SK-N-SH (cell line): ENCODE measurements at regions of chr15 and their contacts with region 1.

Region 1: GRCh38 chr15:90174140-90174875 is 26.8 kb upstream of the SEMA4B start:
- DNase-seq: peak; percentile 89
- H3K4me3 ChIP-seq: no peak overlapping the region
- H3K27ac ChIP-seq: peak overlapping the region; percentile 41 to 89; a peak in 3 of 4 replicates
- H3K4me1 ChIP-seq: peaks cover 11 to 13% of the 10 kb centered on the region in 2 experiments; a peak in 2 of 4 replicates
- H3K27me3 ChIP-seq: no peaks in the 10 kb centered on the region
- CTCF ChIP-seq: no peak
- EP300 ChIP-seq: peak in 1 of 2 experiments; percentile 82; a peak in 3 of 4 replicates
- RAD21 ChIP-seq: no peak

Region 2: GRCh38 chr15:89926158-89926557 is 248.2 kb before region 1 on chr15:
- CTCF ChIA-PET with region 1: no interaction called
- POLR2A ChIA-PET with region 1: no interaction called
- DNase-seq: no peak
- H3K4me3 ChIP-seq: no peak overlapping the region
- H3K27ac ChIP-seq: no peak overlapping the region
- H3K4me1 ChIP-seq: peaks cover 0 to 3% of the 10 kb centered on the region in 2 experiments; a peak in 1 of 4 replicates
- H3K27me3 ChIP-seq: no peaks in the 10 kb centered on the region
- CTCF ChIP-seq: no peak
- EP300 ChIP-seq: no peak
- RAD21 ChIP-seq: no peak

Region 3: DNA sequence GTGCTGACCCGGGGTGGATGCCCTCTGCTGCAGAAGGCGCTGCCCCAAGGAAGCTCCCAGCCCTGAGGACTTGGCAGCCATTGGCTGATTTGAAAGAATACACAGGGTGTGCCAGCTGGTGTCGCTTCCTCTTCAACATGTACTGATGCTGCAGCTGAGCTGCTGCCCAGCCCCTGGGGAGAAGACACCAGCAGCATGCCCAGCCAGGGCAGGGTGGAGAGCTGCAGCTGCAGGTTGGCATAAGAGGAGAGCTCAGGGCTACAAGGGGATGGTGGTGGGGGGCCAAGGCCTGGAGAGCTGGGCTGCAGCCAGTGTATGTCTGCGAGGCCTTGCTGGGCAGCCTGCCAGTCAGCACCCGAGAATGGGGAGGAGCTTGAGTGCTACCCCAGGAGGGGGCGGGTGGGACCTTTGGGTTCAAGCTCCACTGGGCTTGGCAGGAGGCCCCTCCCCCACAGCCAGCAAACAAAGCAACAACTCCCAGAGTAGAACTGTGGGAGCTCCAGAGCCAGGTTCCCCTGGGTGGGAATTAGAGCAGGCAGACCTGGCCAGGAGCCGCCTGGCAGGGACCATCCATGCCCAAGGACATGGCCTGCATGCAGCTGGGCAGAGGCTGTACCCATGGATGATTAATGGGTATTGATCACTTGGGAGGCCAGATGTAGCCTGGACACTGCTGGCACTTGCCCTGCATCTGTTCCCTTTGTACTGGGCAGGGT is 17.6 kb after region 1 on chr15:
- CTCF ChIA-PET with region 1: interaction called, 4 read pairs
- POLR2A ChIA-PET with region 1: interaction called, 11 read pairs
- DNase-seq: peak; percentile 92
- H3K4me3 ChIP-seq: no peak overlapping the region
- H3K27ac ChIP-seq: peak overlapping the region; percentile 0 to 87; a peak in 3 of 4 replicates
- H3K4me1 ChIP-seq: peaks cover 8 to 41% of the 10 kb centered on the region in 2 experiments; a peak in 3 of 4 replicates
- H3K27me3 ChIP-seq: no peaks in the 10 kb centered on the region
- CTCF ChIP-seq: no peak
- EP300 ChIP-seq: peak in 1 of 2 experiments; percentile 66; a peak in 2 of 4 replicates
- RAD21 ChIP-seq: peak; percentile 32; the same call in 1 of the 2 replicates